ENCODE measurements at regions of chr5 and their contacts with region 1.

Region 1: GRCh38 chr5:14534773-14535172 is 46.8 kb upstream of the OTULINL start:
- DNase-seq: no peak
- H3K4me3 ChIP-seq: no peak overlapping the region
- H3K27ac ChIP-seq: no peak overlapping the region
- H3K4me1 ChIP-seq: no peaks in the 10 kb centered on the region
- H3K27me3 ChIP-seq: no peaks in the 10 kb centered on the region
- CTCF ChIP-seq: no peak

Region 2: GRCh38 chr5:14463629-14464028 is 71.1 kb before region 1 on chr5:
- intact Hi-C with region 1: no loop called
- DNase-seq: no peak
- H3K4me3 ChIP-seq: no peak overlapping the region
- H3K27ac ChIP-seq: no peak overlapping the region
- H3K4me1 ChIP-seq: no peaks in the 10 kb centered on the region
- H3K27me3 ChIP-seq: no peaks in the 10 kb centered on the region
- CTCF ChIP-seq: no peak

Region 3: DNA sequence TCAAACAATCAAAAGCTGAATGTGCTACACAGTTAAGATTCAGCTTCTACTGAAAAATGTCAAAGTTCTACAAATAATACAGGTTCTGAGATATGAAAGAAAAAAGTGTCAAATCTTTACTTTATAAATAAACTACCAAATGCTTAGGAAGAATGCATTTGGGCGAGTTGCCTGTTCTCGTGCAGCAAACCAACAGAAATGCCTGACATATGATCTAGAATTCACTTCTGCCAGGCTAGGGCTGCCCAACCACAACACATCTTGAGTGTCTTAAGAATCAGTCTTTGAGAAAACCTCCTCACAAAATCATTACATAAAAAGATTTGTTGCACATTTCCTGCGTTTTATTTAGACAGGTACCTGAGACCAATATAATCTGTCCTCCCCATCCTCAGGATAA is 294.6 kb after region 1 on chr5:
- intact Hi-C with region 1: loop called (anchors 5 kb)
- DNase-seq: no peak
- H3K4me3 ChIP-seq: no peak overlapping the region
- H3K27ac ChIP-seq: peak overlapping the region; percentile 66 to 67
- H3K4me1 ChIP-seq: peaks cover 0 to 68% (median 31%) of the 10 kb centered on the region in 4 donors
- H3K27me3 ChIP-seq: no peaks in the 10 kb centered on the region
- CTCF ChIP-seq: no peak

Measured in tibial artery (tissue), 4 donors.